Heart left ventricle (tissue), 16 donors: ENCODE measurements at regions of chr2 and their contacts with region 1.

Region 1: DNA sequence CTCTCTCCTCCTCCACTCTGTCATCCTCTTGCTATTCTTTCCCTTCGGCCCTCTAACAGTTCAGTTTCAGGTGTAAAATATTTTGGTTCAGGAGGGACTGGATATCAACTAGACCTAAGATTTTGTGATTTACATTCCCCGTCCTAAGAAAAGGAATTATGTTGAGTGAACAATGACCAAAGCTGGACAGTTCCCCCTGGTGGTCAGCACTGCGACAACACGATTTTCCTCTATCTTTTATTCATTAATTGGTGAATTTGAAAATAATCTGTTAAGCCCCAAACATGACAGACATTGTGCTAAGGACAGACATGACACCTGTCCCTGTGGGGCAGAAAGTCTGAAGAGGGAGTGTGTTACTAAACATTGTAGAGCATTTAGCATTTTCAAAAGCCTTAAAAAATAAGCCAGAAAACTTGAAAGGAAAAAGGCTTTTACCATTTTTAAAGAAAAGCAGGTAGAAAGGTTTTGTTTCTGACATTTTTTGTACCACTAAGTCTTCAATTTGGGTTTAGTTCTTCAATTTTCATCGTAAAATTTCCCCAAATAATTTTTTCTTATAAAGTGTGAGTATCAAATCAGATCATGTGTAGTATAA is 28.4 kb upstream of the GTF2A1L start:
- DNase-seq: peak in 2 of 5 donors; percentile 18 to 35
- ATAC-seq: no peak
- H3K4me3 ChIP-seq: no peak overlapping the region
- H3K27ac ChIP-seq: no peak overlapping the region
- H3K4me1 ChIP-seq: peaks cover 0 to 4% (median 0%) of the 10 kb centered on the region in 12 donors
- H3K27me3 ChIP-seq: no peaks in the 10 kb centered on the region
- CTCF ChIP-seq: peak; percentile 55 to 82 (median 74)
- POLR2A ChIP-seq: no peak

Region 2: GRCh38 chr2:48306409-48307284 is 282.6 kb before region 1 on chr2:
- intact Hi-C with region 1: loop called in 1 of 10 experiments (anchors 10 kb)
- DNase-seq: no peak
- ATAC-seq: peak in 3 of 4 donors; percentile 36 to 49 (median 36)
- H3K4me3 ChIP-seq: no peak overlapping the region
- H3K27ac ChIP-seq: peak overlapping the region in 5 of 12 donors; percentile 17 to 35 (median 28)
- H3K4me1 ChIP-seq: peaks cover 0 to 10% (median 0%) of the 10 kb centered on the region in 12 donors
- H3K27me3 ChIP-seq: no peaks in the 10 kb centered on the region
- CTCF ChIP-seq: no peak
- POLR2A ChIP-seq: no peak

Region 3: DNA sequence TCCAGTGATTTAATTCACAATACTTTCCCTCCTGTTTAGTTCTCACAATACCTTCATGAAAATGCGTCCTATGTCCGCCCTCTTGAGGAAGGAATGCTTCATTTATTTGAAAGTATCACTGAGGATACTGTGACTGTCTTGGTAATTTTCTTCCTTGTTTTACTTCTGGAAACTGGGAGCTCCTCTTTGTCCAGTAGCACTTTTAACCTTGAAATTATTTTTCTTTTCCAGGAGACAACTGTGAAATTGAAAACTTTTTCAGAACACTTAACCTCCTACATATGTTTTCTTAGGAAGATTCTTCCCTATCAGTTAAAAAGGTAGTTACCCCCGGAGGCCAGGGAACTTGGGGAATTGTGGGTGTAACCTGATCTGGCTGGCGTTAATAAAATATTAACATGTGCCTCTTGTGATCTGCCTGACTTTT is 118.2 kb before region 1 on chr2:
- intact Hi-C with region 1: loop called in 6 of 10 experiments (anchors 5 to 10 kb)
- DNase-seq: peak in 1 of 5 donors; percentile 25
- ATAC-seq: peak; percentile 48 to 67 (median 62)
- H3K4me3 ChIP-seq: no peak overlapping the region
- H3K27ac ChIP-seq: peak overlapping the region in 3 of 12 donors; percentile 12 to 55 (median 46)
- H3K4me1 ChIP-seq: peaks cover 0 to 20% (median 3%) of the 10 kb centered on the region in 12 donors
- H3K27me3 ChIP-seq: no peaks in the 10 kb centered on the region
- CTCF ChIP-seq: peak; percentile 40 to 77 (median 67)
- POLR2A ChIP-seq: no peak

Region 4: GRCh38 chr2:48482313-48482712 is 107.0 kb before region 1 on chr2:
- intact Hi-C with region 1: loop called in 5 of 10 experiments (anchors 10 kb)
- DNase-seq: no peak
- ATAC-seq: no peak
- H3K4me3 ChIP-seq: no peak overlapping the region
- H3K27ac ChIP-seq: peak overlapping the region in 1 of 12 donors; percentile 81
- H3K4me1 ChIP-seq: peaks cover 0 to 13% (median 0%) of the 10 kb centered on the region in 12 donors
- H3K27me3 ChIP-seq: no peaks in the 10 kb centered on the region
- CTCF ChIP-seq: no peak
- POLR2A ChIP-seq: no peak

Region 5: DNA sequence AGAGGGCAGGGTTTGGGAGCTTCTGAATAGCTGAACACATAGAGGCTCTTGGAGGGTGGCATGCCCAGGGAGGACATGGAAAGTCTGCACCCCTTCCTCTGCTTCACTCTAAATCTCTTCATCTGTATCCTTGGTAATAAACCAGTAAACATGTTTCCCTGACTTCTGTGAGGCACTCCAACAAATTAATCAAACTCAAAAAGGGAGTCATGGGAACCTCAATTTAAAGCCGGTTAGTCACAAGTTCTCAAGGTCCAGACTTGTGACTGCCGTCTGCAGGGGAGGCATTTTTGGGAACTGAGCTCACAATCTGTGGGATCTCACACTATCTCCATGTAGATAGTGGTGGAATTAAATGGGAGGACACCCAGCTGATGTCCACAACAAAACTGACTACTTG is 92.4 kb before region 1 on chr2:
- intact Hi-C with region 1: loop called in 1 of 10 experiments (anchors 10 kb)
- DNase-seq: no peak
- ATAC-seq: no peak
- H3K4me3 ChIP-seq: no peak overlapping the region
- H3K27ac ChIP-seq: no peak overlapping the region
- H3K4me1 ChIP-seq: no peaks in the 10 kb centered on the region
- H3K27me3 ChIP-seq: no peaks in the 10 kb centered on the region
- CTCF ChIP-seq: no peak
- POLR2A ChIP-seq: no peak

Region 6: GRCh38 chr2:48510329-48510728 is 78.9 kb before region 1 on chr2:
- intact Hi-C with region 1: loop called in 1 of 10 experiments (anchors 10 kb)
- DNase-seq: no peak
- ATAC-seq: no peak
- H3K4me3 ChIP-seq: no peak overlapping the region
- H3K27ac ChIP-seq: peak overlapping the region in 2 of 12 donors; percentile 15 to 76
- H3K4me1 ChIP-seq: peaks cover 0 to 30% (median 19%) of the 10 kb centered on the region in 12 donors
- H3K27me3 ChIP-seq: no peaks in the 10 kb centered on the region
- CTCF ChIP-seq: no peak
- POLR2A ChIP-seq: no peak

Region 7: GRCh38 chr2:48530033-48530804 is 59.0 kb before region 1 on chr2 and contains the start of gene STON1:
- intact Hi-C with region 1: loop called in 9 of 10 experiments (anchors 2 to 10 kb)
- DNase-seq: peak; percentile 56 to 81 (median 71)
- ATAC-seq: peak; percentile 20 to 73 (median 54)
- H3K4me3 ChIP-seq: peak within 1 kb of the TSS; percentile 58 to 98 (median 83)
- H3K27ac ChIP-seq: peak within 1 kb of the TSS; percentile 36 to 96 (median 83)
- H3K4me1 ChIP-seq: peaks cover 0 to 47% (median 25%) of the 10 kb centered on the region in 12 donors
- H3K27me3 ChIP-seq: no peaks in the 10 kb centered on the region
- CTCF ChIP-seq: peak in 4 of 12 donors; percentile 3 to 15 (median 12)
- POLR2A ChIP-seq: peak in 1 of 2 donors; percentile 24
- total RNA-seq, gene STON1: 2.8 to 8.6 (median 4.6) TPM

Region 8: GRCh38 chr2:48633143-48633542 is 43.9 kb after region 1 on chr2:
- intact Hi-C with region 1: no loop called
- DNase-seq: no peak
- ATAC-seq: no peak
- H3K4me3 ChIP-seq: no peak overlapping the region
- H3K27ac ChIP-seq: no peak overlapping the region
- H3K4me1 ChIP-seq: no peaks in the 10 kb centered on the region
- H3K27me3 ChIP-seq: no peaks in the 10 kb centered on the region
- CTCF ChIP-seq: no peak
- POLR2A ChIP-seq: no peak

Region 9: DNA sequence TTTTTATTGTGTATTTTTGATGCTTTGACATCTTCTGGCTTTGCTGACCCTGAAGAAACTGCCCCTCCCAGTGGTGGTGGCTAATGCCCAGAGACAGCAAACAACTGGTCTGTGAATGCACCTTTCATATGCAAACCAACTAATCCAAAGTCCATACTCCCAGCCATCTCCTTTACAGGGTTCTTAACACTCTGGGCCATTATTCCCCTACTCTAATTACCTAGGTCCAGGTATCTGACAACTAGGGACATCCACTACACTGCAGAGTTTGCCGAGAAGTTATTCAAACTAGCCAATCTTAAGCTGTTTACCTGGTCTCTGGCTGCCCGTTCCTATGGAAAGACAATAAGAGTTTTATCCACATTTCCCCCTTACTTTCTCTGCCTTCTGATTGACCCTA is 491.4 kb after region 1 on chr2:
- intact Hi-C with region 1: no loop called
- DNase-seq: no peak
- ATAC-seq: no peak
- H3K4me3 ChIP-seq: no peak overlapping the region
- H3K27ac ChIP-seq: no peak overlapping the region
- H3K4me1 ChIP-seq: no peaks in the 10 kb centered on the region
- H3K27me3 ChIP-seq: no peaks in the 10 kb centered on the region
- CTCF ChIP-seq: no peak
- POLR2A ChIP-seq: no peak